ENCODE measurements at regions of chr13 and their contacts with region 1.

Region 1: GRCh38 chr13:112942689-112943308 is 26.2 kb upstream of the MCF2L start:
- DNase-seq: peak; percentile 83 to 96 (median 90)
- ATAC-seq: peak; percentile 100
- H3K4me3 ChIP-seq: peak overlapping the region; percentile 63
- H3K4me3 Mint-ChIP-seq: peak overlapping the region; percentile 77 to 99 (median 88)
- H3K27ac ChIP-seq: no peak overlapping the region
- H3K27ac Mint-ChIP-seq: peak overlapping the region in 4 of 9 donors; percentile 14 to 80 (median 46)
- H3K4me1 ChIP-seq: peaks cover 0 to 9% of the 10 kb centered on the region in 2 donors
- H3K4me1 Mint-ChIP-seq: peaks cover 7 to 12% (median 9%) of the 10 kb centered on the region in 7 donors
- H3K27me3 ChIP-seq: peaks cover 3 to 4% of the 10 kb centered on the region in 2 donors
- H3K27me3 Mint-ChIP-seq: peaks cover 8 to 52% (median 21%) of the 10 kb centered on the region in 5 donors

Region 2: GRCh38 chr13:112968908-112969691 is 26.3 kb after region 1 on chr13 and contains the start of gene MCF2L:
- CTCF ChIA-PET with region 1: interaction called, 8 read pairs
- POLR2A ChIA-PET with region 1: interaction called, 3 read pairs
- intact Hi-C with region 1: loop called (anchors 1 to 2 kb)
- DNase-seq: peak; percentile 33 to 80 (median 78)
- ATAC-seq: peak; percentile 83
- H3K4me3 ChIP-seq: peak within 1 kb of the TSS; percentile 73
- H3K4me3 Mint-ChIP-seq: peak within 1 kb of the TSS; percentile 89 to 100 (median 94)
- H3K27ac ChIP-seq: peak within 1 kb of the TSS; percentile 62
- H3K27ac Mint-ChIP-seq: peak within 1 kb of the TSS; percentile 67 to 97 (median 94)
- H3K4me1 ChIP-seq: peaks cover 10 to 14% of the 10 kb centered on the region in 2 donors
- H3K4me1 Mint-ChIP-seq: peaks cover 9 to 57% (median 42%) of the 10 kb centered on the region in 7 donors
- H3K27me3 ChIP-seq: no peaks in the 10 kb centered on the region
- H3K27me3 Mint-ChIP-seq: peaks cover 0 to 35% (median 0%) of the 10 kb centered on the region in 5 donors
- total RNA-seq, gene MCF2L: 0.51 to 32.6 (median 21.9) TPM

Region 3: GRCh38 chr13:113029487-113030258 is 86.9 kb after region 1 on chr13:
- CTCF ChIA-PET with region 1: interaction called, 31 read pairs
- POLR2A ChIA-PET with region 1: no interaction called
- intact Hi-C with region 1: loop called in 1 of 2 experiments (anchors 1 kb)
- DNase-seq: peak; percentile 4 to 58 (median 33)
- ATAC-seq: peak; percentile 61
- H3K4me3 ChIP-seq: no peak overlapping the region
- H3K4me3 Mint-ChIP-seq: no peak overlapping the region
- H3K27ac ChIP-seq: no peak overlapping the region
- H3K27ac Mint-ChIP-seq: no peak overlapping the region
- H3K4me1 ChIP-seq: no peaks in the 10 kb centered on the region
- H3K4me1 Mint-ChIP-seq: peaks cover 0 to 7% (median 0%) of the 10 kb centered on the region in 7 donors
- H3K27me3 ChIP-seq: no peaks in the 10 kb centered on the region
- H3K27me3 Mint-ChIP-seq: no peaks in the 10 kb centered on the region

Region 4: DNA sequence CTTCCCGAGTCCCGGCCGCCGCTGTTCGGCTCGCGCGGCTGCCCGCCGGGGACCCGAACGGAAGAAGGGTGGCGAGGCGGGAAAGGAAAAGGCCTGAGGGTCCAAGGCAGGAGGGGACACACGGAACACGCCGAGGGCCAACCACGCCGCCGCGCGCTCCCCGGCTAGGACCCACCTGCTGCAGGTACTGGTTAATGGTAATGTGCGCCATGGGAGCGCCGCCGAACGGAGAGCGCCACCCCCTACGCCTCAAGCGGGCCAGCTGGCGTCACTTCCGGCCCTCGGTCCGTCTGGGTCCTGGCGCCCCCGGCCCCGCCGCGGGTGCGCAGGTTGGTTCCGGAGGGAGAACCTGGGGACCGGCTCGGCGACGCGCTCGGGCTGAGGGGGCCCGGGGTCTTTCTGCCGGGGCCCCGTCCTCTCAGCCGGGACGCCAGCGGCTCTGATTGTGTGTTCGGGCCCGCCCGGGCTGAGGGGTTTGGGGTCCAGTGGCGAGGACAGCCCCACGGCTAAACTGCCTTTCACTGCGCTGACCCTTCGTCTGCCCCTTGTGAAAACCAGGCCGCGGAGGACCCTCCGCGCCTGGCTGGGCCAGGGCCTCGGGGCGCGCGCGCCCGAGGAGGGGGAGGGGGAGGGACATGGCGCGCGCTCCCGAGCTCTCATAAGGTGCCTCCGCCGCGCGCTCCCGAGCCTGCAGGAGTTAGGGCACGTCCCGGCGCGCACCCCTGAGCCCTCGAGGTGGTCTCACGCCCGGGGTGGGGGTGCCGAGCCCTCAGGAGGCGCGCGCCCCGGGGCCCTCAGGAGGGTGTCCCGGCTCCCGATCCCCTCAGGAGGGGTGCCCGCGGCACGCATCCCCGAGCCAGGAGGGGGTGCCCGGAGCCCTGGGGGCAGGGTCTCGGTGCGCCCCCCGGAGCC is 265.9 kb after region 1 on chr13 and contains the start of gene PCID2:
- CTCF ChIA-PET with region 1: no interaction called
- POLR2A ChIA-PET with region 1: no interaction called
- intact Hi-C with region 1: loop called (anchors 1 to 2 kb)
- DNase-seq: peak; percentile 87 to 99 (median 93)
- ATAC-seq: peak; percentile 81
- H3K4me3 ChIP-seq: peak within 1 kb of the TSS; percentile 79
- H3K4me3 Mint-ChIP-seq: peak within 1 kb of the TSS; percentile 87 to 94 (median 90)
- H3K27ac ChIP-seq: peak within 1 kb of the TSS; percentile 88
- H3K27ac Mint-ChIP-seq: peak within 1 kb of the TSS; percentile 83 to 95 (median 92)
- H3K4me1 ChIP-seq: peaks cover 25 to 46% of the 10 kb centered on the region in 2 donors
- H3K4me1 Mint-ChIP-seq: peaks cover 46 to 68% (median 57%) of the 10 kb centered on the region in 7 donors
- H3K27me3 ChIP-seq: no peaks in the 10 kb centered on the region
- H3K27me3 Mint-ChIP-seq: no peaks in the 10 kb centered on the region
- total RNA-seq, gene PCID2: 44.2 to 83.7 (median 77.1) TPM

Region 5: DNA sequence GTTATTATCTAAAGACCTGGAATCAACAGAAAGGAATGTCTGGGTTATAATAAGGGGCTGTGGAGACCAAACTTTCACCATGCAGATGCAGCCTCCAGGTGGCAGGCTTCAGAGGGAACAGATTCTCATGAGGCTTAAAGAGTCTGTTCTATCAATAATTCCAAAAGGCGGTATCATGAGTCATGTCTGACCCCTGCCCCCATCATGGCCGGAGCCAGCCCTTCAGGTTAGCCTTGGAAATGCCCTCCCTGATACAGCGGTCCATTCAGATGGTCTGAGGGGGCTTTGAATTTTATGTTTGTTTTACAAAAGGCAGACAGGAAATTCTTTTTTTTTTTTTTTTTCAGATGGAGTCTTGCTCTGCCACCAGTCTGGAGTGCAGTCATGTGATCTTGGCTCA is 332.6 kb after region 1 on chr13:
- CTCF ChIA-PET with region 1: no interaction called
- POLR2A ChIA-PET with region 1: no interaction called
- intact Hi-C with region 1: loop called in 1 of 2 experiments (anchors 1 kb)
- DNase-seq: peak in 7 of 9 donors; percentile 22 to 55 (median 51)
- ATAC-seq: peak; percentile 56
- H3K4me3 ChIP-seq: no peak overlapping the region
- H3K4me3 Mint-ChIP-seq: peak overlapping the region in 6 of 10 donors; percentile 33 to 65 (median 56)
- H3K27ac ChIP-seq: no peak overlapping the region
- H3K27ac Mint-ChIP-seq: peak overlapping the region in 3 of 9 donors; percentile 19 to 55 (median 45)
- H3K4me1 ChIP-seq: no peaks in the 10 kb centered on the region
- H3K4me1 Mint-ChIP-seq: peaks cover 6 to 18% (median 11%) of the 10 kb centered on the region in 7 donors
- H3K27me3 ChIP-seq: no peaks in the 10 kb centered on the region
- H3K27me3 Mint-ChIP-seq: peaks cover 0 to 18% (median 8%) of the 10 kb centered on the region in 5 donors

Region 6: DNA sequence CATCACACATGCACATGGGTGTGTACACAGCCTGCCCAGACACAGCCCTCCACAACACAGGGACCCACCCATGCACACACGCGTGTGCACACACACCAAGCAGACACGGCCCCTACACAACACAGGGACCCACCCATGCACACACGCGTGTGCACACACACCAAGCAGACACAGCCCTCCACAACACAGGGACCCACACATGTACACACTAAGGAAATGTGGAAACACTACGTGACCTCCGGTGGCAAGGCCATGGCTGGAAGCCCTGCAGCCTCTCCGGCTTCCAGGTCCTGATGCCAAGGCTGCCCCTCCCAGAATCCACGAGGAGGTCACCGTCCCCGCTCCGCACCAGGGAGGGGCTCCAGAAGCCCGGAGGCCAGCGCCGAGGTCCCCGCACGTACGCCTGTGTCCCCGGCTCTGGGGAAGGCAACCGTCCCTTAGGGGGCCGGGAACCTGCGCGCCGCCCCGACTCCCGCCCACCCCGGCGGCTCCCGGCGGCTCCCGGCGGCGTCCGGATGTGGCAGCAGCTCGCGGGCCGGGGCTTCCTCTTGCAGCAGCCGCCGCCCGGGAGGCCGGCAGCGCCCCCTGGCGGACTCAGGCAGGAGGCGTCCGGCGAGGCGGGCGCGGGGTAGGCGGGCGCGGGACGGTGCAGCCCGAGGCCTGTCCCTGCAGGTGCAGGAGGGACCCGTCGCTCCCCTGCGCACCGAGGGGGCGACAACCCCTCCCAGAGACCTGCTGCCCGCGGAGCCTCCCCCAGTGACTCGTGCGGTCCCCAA is 451.0 kb after region 1 on chr13:
- CTCF ChIA-PET with region 1: interaction called, 6 read pairs
- POLR2A ChIA-PET with region 1: no interaction called
- intact Hi-C with region 1: loop called (anchors 1 kb)
- DNase-seq: peak; percentile 75 to 91 (median 86)
- ATAC-seq: peak; percentile 99
- H3K4me3 ChIP-seq: peak overlapping the region; percentile 79
- H3K4me3 Mint-ChIP-seq: peak overlapping the region; percentile 84 to 97 (median 90)
- H3K27ac ChIP-seq: peak overlapping the region; percentile 74
- H3K27ac Mint-ChIP-seq: peak overlapping the region in 8 of 9 donors; percentile 29 to 89 (median 72)
- H3K4me1 ChIP-seq: peaks cover 0 to 7% of the 10 kb centered on the region in 2 donors
- H3K4me1 Mint-ChIP-seq: peaks cover 4 to 9% (median 5%) of the 10 kb centered on the region in 7 donors
- H3K27me3 ChIP-seq: no peaks in the 10 kb centered on the region
- H3K27me3 Mint-ChIP-seq: peaks cover 0 to 4% (median 0%) of the 10 kb centered on the region in 5 donors